Posterior vena cava (tissue), 2 donors: ENCODE measurements at regions of chr17 and their contacts with region 1.

Region 1: DNA sequence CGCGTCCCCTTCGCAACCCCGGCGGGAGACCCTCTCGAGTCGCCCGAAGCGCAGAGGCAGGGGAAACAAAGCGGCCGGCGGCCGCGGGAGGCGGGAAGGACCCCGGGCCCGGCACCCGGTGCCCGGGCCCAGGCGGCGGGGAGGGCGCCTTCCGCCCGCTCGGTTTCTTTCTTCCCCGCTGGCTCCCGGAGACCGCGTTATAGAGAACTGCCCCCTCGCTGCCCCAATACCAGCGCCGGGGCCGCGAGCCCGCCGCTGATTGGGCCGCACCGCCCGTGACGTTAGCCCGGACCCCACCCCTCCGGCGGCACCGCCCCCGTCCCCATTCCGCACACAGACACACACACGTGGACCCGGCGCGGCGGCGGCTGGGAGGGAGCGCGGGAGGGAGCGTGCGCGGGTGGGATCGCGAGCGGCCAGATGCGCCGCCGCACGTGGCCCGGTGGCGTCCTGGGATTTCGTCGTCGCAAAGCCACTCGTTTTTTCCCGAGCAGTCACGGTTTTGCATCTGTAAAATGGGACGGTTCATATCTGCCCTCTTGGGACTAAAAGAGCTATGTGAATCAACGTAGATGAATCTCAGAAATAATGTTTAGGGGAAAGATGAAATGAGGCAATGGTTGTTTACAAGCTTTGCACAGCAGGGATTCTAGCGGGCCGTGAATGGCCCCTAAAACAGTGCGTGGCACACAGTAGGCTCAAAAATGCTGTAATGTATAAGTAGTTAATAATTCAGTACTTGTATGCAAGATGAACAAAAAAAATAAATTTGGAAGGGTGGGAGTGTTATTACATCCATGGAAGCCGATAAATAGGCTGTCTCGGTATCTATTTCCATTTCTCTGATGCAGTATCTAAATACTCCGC is at the start of gene EPOP:
- DNase-seq: peak; percentile 96
- total RNA-seq, gene EPOP: 1.6 to 2.6 TPM

Region 2: GRCh38 chr17:38636054-38636453 is 38.9 kb before region 1 on chr17:
- intact Hi-C with region 1: no loop called
- DNase-seq: no peak

Region 3: DNA sequence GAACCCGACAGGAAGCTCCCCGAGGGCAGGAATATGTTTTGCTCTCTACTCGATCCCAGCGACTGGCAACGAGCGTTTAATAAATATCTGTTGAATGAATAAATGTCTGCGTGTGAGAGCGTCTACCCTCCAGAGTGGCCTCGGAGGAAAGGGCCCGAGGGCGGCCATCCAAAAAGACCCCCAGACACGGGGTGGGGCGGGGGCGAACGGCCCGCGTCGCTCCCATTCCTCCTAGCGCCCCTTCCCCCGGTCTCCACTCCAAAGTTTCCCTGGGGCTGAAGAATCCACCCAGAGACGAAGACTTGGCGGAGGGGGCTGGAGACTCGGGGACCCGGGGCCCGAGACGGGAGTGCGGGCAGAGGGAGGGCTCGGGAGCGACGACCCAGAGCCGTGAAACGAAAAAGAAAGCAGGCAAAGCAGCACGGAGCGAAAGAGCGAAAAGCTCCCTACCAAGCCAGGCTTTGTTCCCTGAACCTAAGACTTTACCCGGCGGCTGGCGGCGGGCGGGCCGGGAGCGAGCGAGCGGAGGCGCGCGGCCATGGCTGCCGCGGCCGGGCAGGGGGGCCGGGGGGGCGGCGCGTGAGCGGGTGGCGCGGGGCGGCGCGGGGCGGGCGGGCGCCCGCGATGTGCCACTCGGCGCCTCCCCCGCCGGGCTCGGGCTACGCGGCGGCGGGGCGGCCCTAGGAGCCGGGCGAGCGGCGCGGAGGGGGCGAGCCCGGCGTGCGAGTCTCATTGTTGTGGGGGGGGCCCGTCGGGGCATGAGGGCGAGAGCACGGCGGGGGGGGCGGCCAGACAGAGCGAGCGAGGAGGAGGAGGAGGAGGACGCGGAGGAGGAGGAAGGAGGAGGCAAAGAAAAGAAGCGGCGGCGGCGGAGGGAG is 29.9 kb after region 1 on chr17 and contains the start of gene MLLT6:
- intact Hi-C with region 1: loop called in 1 of 2 experiments (anchors 2 kb)
- DNase-seq: peak; percentile 93
- total RNA-seq, gene MLLT6: 79.7 to 82.4 TPM

Region 4: GRCh38 chr17:38729886-38730525 is 55.0 kb after region 1 on chr17 and contains the start of gene CISD3:
- intact Hi-C with region 1: loop called (anchors 5 kb)
- DNase-seq: peak; percentile 95
- total RNA-seq, gene CISD3: 24.7 to 27.4 TPM

Region 5: DNA sequence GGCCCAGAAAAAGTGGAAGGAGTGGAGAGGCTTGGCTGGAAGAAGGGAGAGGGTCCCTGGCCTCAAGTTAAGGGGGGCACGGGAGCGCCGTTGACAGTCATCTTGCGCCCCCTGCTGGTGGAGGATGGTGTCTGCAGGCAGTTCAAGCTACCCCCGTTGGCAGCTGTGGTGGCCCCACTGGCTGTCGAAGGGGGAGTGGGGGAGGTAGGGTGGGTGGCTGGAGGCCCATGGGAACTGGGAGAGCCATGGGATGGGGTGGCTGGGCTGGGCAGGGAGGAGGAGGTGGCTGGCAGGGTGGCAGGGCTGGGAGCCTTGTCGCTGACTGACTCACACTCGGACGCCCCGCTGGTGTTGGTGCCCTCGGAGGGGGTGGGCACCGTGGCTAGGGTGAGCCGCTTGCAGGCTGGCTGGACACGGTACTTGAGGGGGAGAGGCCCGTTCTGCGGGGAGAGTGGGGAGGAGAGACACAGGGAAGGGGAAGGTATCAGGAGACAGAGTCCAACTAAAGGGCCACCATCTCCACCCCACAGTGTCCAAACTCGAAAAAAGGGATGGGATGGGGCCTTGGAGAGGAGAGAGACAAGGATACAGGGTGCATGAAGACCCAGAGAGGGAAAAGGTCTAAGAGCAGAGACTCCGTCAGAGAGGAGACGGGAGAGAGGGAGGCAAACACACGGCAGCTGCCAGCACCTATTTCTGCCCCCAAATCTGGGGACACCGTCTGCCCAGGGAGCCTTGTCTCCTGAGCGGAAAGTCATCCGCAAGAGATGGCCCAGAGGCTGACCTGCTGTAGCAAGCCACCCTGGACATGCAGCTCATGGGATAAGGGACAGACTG is 60.4 kb after region 1 on chr17:
- intact Hi-C with region 1: loop called (anchors 5 kb)
- DNase-seq: peak; percentile 92

Region 6: GRCh38 chr17:38922538-38923297 is 247.7 kb after region 1 on chr17:
- intact Hi-C with region 1: no loop called
- DNase-seq: peak; percentile 83